MCF 10A (cell line): ENCODE measurements at regions of chr2 and their contacts with region 1.

Region 1: DNA sequence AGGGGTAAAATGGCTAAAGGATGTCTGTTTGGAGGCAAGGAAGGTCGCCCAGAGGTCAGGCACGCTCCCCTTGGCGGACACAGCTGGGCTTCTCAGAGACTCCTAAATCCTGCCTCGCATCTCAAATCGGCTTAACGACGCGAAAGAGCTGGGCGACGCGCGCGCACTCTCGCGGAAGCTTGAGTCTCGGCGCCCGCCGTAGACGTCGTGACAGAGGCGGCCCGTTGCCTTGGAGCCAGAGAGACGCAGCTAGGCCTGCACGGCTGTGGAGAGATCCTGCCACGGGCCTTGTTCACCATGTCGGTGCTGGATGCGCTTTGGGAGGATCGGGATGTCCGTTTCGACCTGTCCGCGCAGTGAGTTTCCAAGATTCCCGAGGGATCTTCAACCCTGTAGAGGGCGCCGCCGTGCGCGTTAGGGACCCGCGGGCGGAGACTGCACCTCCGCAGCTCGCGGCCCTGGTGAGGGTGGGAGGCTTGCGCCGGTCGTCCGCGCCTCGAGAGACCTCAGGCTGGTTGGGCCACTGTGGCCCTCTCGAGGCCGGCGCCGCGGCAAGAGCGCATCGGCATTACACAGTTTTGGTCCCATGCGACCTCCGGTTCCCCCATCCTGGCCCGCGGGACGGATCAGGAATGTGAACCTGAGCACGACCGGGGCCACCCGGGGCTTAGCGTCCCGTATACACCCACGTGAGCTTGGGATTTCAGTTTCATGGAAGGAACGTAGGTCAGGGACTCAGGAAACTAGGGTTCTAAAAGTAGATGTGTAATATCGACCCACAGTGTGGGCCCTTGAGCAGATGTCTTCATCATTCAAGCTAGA is at the start of gene BBS5:
- DNase-seq: peak; percentile 77
- H3K4me3 Mint-ChIP-seq: peak within 1 kb of the TSS; percentile 90
- H3K27ac Mint-ChIP-seq: peak within 1 kb of the TSS; percentile 71
- H3K4me1 Mint-ChIP-seq: peaks cover 12% of the 10 kb centered on the region
- H3K27me3 Mint-ChIP-seq: no peaks in the 10 kb centered on the region
- CTCF ChIP-seq: peak; percentile 28
- total RNA-seq, gene BBS5: 9.0 and 12.7 TPM in 2 replicates

Region 2: GRCh38 chr2:169462896-169463695 is 16.4 kb before region 1 on chr2:
- CTCF ChIA-PET with region 1: interaction called, 4 read pairs
- POLR2A ChIA-PET with region 1: interaction called, 18 read pairs
- intact Hi-C with region 1: no loop called
- DNase-seq: peak; percentile 63
- H3K4me3 Mint-ChIP-seq: no peak overlapping the region
- H3K27ac Mint-ChIP-seq: peak overlapping the region; percentile 6
- H3K4me1 Mint-ChIP-seq: peaks cover 14% of the 10 kb centered on the region
- H3K27me3 Mint-ChIP-seq: no peaks in the 10 kb centered on the region
- CTCF ChIP-seq: no peak

Region 3: DNA sequence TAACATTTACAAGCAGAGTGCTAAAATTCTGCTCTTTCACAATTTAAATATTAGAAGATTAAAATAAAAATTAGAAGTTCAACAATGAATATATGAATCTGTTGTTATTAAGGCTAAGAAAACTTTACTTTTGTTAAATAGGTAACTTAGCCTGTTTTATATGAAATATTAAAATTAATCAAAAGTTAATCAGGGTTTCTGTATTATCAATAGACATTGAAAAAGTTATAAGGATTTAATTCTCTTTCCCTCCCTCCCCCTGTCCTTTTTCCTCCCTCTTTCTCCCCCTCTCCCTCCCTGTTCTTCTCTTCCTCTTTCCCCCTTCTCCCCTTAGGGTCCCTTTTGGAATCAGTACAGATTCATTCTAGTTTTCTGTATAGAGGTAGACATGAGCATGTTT is 11.9 kb after region 1 on chr2:
- CTCF ChIA-PET with region 1: interaction called, 11 read pairs
- POLR2A ChIA-PET with region 1: interaction called, 15 read pairs
- intact Hi-C with region 1: no loop called
- DNase-seq: no peak
- H3K4me3 Mint-ChIP-seq: no peak overlapping the region
- H3K27ac Mint-ChIP-seq: no peak overlapping the region
- H3K4me1 Mint-ChIP-seq: no peaks in the 10 kb centered on the region
- H3K27me3 Mint-ChIP-seq: no peaks in the 10 kb centered on the region
- CTCF ChIP-seq: no peak